HEK293 (cell line): ENCODE measurements at regions of chr19 and their contacts with region 1.

Region 1: GRCh38 chr19:49889687-49890348 is 6.9 kb downstream of the IL4I1 start:
- H3K4me3 ChIP-seq: peak overlapping the region; percentile 32
- H3K27ac ChIP-seq: no peak overlapping the region
- H3K4me1 ChIP-seq: no peaks in the 10 kb centered on the region
- CTCF ChIP-seq: no peak

Region 2: DNA sequence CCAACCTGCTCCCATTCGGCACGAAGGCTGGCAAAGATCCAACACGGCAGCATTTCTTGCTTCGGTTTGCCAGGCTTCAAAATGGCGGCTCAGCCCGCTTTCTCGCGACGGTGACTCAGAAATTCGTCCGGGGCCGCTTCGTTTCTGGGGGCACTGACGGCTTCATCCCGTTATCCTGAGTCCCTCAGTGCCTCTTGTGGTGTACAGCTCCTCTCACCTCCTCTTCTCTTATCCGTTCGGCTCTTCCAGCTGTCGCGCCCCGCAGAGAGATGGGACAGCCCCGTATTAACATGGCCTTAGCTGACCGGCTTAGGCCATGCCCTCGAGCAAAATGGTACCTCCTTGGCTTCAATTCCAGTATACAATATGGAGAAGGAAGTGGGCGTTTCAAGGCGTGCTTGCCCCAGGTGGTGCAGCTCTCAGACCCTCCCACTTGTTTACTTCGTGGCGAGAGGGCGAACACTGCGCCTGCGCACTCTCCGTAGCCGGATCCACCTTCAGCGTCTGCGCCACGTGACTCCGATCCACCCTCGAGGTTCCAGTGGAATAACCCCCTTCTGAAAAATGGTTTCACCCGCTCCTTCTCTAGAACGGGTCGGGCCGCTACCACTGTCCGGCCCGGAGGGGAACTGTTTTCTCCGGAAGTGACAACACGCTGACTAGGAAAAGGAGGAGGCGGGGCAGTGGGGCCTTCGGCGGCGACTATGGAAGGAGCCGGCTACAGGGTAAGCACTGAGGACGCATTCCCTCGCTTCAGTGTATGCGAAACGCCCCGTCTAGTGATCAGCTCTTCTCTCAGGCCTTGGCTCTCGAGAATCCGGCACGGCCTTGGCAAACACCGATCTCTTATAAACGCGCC is 12.6 kb before region 1 on chr19 and contains the starts of genes AKT1S1 and TBC1D17:
- CTCF ChIA-PET with region 1: interaction called, 3 read pairs
- POLR2A ChIA-PET with region 1: interaction called, 27 read pairs
- H3K4me3 ChIP-seq: peak within 1 kb of the TSS; percentile 79
- H3K27ac ChIP-seq: peak within 1 kb of the TSS; percentile 94
- H3K4me1 ChIP-seq: peaks cover 9% of the 10 kb centered on the region
- CTCF ChIP-seq: no peak

Region 3: GRCh38 chr19:49937750-49938381 is 48.0 kb after region 1 on chr19:
- CTCF ChIA-PET with region 1: no interaction called
- POLR2A ChIA-PET with region 1: no interaction called
- H3K4me3 ChIP-seq: peak overlapping the region; percentile 29
- H3K27ac ChIP-seq: no peak overlapping the region
- H3K4me1 ChIP-seq: peaks cover 3% of the 10 kb centered on the region; the same call in 1 of the 2 replicates
- CTCF ChIP-seq: peak; percentile 88